IMR-90 (cell line): ENCODE measurements at regions of chr1 and their contacts with region 1.

Region 1: DNA sequence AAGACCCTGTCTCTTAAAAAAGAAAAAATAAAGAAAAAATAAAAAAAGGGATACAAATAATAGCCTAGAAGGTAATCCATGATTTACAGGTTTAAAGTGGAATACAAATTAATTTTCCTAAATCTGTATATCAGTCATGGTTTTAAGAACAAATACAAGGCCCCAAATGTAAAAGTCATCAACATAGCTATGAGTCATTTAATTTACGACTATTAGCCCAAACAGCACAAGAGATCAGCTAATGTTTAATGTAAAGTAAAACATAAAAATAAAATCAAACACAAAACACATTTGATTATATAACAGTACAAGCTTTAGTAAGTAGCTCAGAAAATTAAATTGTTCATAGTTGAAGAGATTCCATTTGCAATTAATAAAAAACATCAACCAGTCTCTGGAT is 20.3 kb upstream of the TAL1 start:
- DNase-seq: no peak
- ATAC-seq: no peak
- H3K4me3 ChIP-seq: no peak overlapping the region
- H3K27ac ChIP-seq: no peak overlapping the region
- H3K4me1 ChIP-seq: no peaks in the 10 kb centered on the region
- H3K27me3 ChIP-seq: no peaks in the 10 kb centered on the region
- CTCF ChIP-seq: no peak
- POLR2A ChIP-seq: no peak
- RAD21 ChIP-seq: no peak

Region 2: GRCh38 chr1:47262787-47263413 is 10.5 kb after region 1 on chr1:
- CTCF ChIA-PET with region 1: interaction called, 27 read pairs
- POLR2A ChIA-PET with region 1: no interaction called
- dilution Hi-C with region 1: no loop called
- in situ Hi-C with region 1: no loop called
- intact Hi-C with region 1: no loop called
- DNase-seq: peak; percentile 38
- ATAC-seq: peak; percentile 73
- H3K4me3 ChIP-seq: no peak overlapping the region
- H3K27ac ChIP-seq: no peak overlapping the region
- H3K4me1 ChIP-seq: no peaks in the 10 kb centered on the region
- H3K27me3 ChIP-seq: no peaks in the 10 kb centered on the region
- CTCF ChIP-seq: peak; percentile 56
- POLR2A ChIP-seq: no peak
- RAD21 ChIP-seq: peak; percentile 51